ENCODE measurements at regions of chr10 and their contacts with region 1.

Region 1: DNA sequence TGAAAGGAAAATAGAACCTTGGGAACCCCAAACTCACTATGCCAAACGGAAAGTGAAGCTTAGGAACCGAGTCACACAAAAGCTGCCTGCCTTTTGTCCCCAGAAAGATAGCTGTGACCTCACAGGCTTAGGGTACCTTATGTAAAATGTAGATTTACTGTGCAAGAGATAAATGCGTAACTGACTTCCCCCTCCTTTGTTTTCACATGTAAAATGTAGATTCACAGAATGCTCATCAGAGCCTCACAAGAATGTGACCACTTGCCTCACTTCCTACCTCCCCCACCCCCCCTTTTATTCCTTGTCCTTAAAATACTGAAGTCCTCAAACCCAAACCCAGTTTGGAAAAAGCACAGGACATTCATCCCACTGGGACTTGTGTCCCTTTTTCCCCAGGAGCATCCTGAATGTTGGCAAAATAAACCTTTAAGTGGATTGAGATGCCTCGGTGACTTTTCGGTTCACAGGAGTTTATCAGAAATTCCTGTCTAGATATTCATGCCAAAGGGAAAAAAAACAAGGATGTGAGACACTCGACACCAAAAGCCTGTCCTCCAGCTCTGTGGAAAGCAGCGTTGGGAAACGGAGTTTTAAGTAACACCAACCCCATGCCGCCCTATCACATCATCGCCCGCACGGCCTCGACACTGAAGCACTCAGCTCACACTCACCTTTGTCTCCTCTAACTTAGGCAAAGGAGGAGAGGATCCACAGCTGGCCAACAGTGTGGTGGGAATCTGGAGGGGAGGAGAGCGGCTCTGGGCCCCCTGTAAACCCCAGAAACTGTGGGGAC is 45.9 kb downstream of the SVIL start:
- DNase-seq: no peak
- ATAC-seq: no peak
- H3K4me3 ChIP-seq: no peak overlapping the region
- H3K4me3 Mint-ChIP-seq: no peak overlapping the region
- H3K27ac ChIP-seq: no peak overlapping the region
- H3K27ac Mint-ChIP-seq: no peak overlapping the region
- H3K4me1 ChIP-seq: peaks cover 6% of the 10 kb centered on the region
- H3K4me1 Mint-ChIP-seq: peaks cover 11% of the 10 kb centered on the region
- H3K27me3 ChIP-seq: no peaks in the 10 kb centered on the region
- H3K27me3 Mint-ChIP-seq: no peaks in the 10 kb centered on the region
- CTCF ChIP-seq: no peak

Region 2: GRCh38 chr10:29600067-29600466 is 11.2 kb after region 1 on chr10:
- CTCF ChIA-PET with region 1: interaction called, 12 read pairs
- POLR2A ChIA-PET with region 1: no interaction called
- intact Hi-C with region 1: no loop called
- DNase-seq: no peak
- ATAC-seq: no peak
- H3K4me3 ChIP-seq: no peak overlapping the region
- H3K4me3 Mint-ChIP-seq: no peak overlapping the region
- H3K27ac ChIP-seq: no peak overlapping the region
- H3K27ac Mint-ChIP-seq: no peak overlapping the region
- H3K4me1 ChIP-seq: no peaks in the 10 kb centered on the region
- H3K4me1 Mint-ChIP-seq: no peaks in the 10 kb centered on the region
- H3K27me3 ChIP-seq: no peaks in the 10 kb centered on the region
- H3K27me3 Mint-ChIP-seq: no peaks in the 10 kb centered on the region
- CTCF ChIP-seq: no peak

Measured in CD8-positive, alpha-beta T cell (primary cell).